ENCODE measurements at regions of chr6 and their contacts with region 1.

Region 1: DNA sequence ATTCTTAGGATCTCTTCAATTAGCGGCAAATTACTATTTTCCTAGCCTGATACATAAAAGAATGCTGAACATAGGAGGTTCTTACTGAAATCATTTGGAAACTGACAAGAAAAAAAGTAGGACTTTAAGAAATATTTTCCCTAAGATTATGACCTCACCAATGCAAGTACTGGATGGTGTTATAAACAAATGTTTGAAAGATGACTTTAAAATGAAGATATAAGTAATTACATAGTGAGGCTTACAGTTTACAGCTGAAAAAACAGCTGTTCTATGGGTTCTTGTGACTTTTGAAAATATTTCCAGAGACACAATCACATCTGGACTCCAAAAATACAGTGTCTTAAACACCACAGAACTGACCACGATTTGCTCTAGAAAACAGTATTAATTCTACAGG is 64.9 kb downstream of the ADAT2 start:
- DNase-seq: no peak
- ATAC-seq: no peak
- H3K4me3 ChIP-seq: no peak overlapping the region
- H3K27ac ChIP-seq: no peak overlapping the region
- H3K4me1 ChIP-seq: no peaks in the 10 kb centered on the region
- H3K27me3 ChIP-seq: peaks cover 9% of the 10 kb centered on the region
- CTCF ChIP-seq: no peak

Region 2: GRCh38 chr6:143299253-143300166 is 86.1 kb before region 1 on chr6:
- CTCF ChIA-PET with region 1: no interaction called
- POLR2A ChIA-PET with region 1: no interaction called
- in situ Hi-C with region 1: no loop called
- intact Hi-C with region 1: no loop called
- DNase-seq: no peak
- ATAC-seq: no peak
- H3K4me3 ChIP-seq: no peak overlapping the region
- H3K27ac ChIP-seq: no peak overlapping the region
- H3K4me1 ChIP-seq: no peaks in the 10 kb centered on the region
- H3K27me3 ChIP-seq: no peaks in the 10 kb centered on the region
- CTCF ChIP-seq: no peak; the same call in 1 of the 2 replicates

Region 3: GRCh38 chr6:143478479-143479062 is 92.9 kb after region 1 on chr6:
- CTCF ChIA-PET with region 1: no interaction called
- POLR2A ChIA-PET with region 1: interaction called, 10 read pairs
- in situ Hi-C with region 1: no loop called
- intact Hi-C with region 1: no loop called
- DNase-seq: no peak
- ATAC-seq: no peak
- H3K4me3 ChIP-seq: no peak overlapping the region
- H3K27ac ChIP-seq: no peak overlapping the region
- H3K4me1 ChIP-seq: no peaks in the 10 kb centered on the region
- H3K27me3 ChIP-seq: no peaks in the 10 kb centered on the region
- CTCF ChIP-seq: no peak